ENCODE measurements at regions of chr7 and their contacts with region 1.

Region 1: GRCh38 chr7:32164346-32164957 is 94.2 kb upstream of the PDE1C start:
- DNase-seq: peak in 1 of 2 experiments; percentile 47
- H3K4me3 ChIP-seq: no peak overlapping the region
- H3K27ac ChIP-seq: no peak overlapping the region
- H3K4me1 ChIP-seq: no peaks in the 10 kb centered on the region
- H3K27me3 ChIP-seq: no peaks in the 10 kb centered on the region
- CTCF ChIP-seq: peak; percentile 29 to 77 (median 64)
- EP300 ChIP-seq: no peak
- POLR2A ChIP-seq: no peak
- RAD21 ChIP-seq: peak; percentile 82

Region 2: GRCh38 chr7:31744294-31744874 is 420.1 kb before region 1 on chr7:
- CTCF ChIA-PET with region 1: interaction called, 17 read pairs
- POLR2A ChIA-PET with region 1: no interaction called
- DNase-seq: peak in 1 of 2 experiments; percentile 67
- H3K4me3 ChIP-seq: no peak overlapping the region
- H3K27ac ChIP-seq: no peak overlapping the region
- H3K4me1 ChIP-seq: no peaks in the 10 kb centered on the region
- H3K27me3 ChIP-seq: peaks cover 0 to 6% (median 1%) of the 10 kb centered on the region in 4 experiments; a peak in 4 of 7 replicates
- CTCF ChIP-seq: peak; percentile 45 to 89 (median 76)
- EP300 ChIP-seq: no peak
- POLR2A ChIP-seq: no peak
- RAD21 ChIP-seq: peak; percentile 98

Region 3: DNA sequence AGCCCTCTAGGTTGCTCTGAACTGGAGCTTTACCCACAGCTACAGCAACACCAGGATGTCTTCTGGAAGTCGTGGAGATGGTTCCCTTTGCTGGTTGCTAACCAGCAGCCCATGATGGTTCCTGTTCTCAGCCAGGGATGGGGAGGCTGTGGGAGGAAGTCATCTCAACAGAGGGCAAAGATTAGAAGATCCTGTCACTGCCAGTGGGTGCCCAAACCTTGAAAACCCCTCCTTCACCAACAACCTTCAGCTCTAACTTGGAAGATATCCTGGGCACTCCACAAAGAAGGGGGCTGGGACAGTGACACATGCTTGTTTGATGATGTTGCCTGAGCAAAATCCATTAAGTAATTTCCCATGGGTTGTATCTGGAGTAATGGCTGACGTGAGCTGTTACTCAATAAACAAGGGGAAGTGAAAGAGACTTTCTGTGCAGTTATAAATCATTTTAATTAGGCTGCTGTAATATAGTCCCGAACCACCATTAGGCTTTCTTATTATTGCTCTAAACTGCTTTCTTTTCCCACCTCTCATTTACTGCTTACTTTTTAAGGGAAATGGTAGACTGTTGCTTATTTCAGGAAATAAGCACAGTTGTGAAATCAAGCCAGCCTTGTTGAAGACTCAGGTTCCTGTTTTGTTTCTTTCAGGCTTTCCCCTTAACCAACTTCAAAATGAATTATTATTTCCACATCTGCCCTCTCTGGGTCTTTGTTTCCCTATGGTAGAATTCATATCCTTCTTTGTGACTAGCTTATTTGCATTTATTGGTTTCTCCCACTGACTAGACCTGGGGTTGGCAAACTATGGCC is 352.6 kb before region 1 on chr7:
- CTCF ChIA-PET with region 1: interaction called, 30 read pairs
- POLR2A ChIA-PET with region 1: no interaction called
- DNase-seq: no peak
- H3K4me3 ChIP-seq: no peak overlapping the region
- H3K27ac ChIP-seq: no peak overlapping the region
- H3K4me1 ChIP-seq: no peaks in the 10 kb centered on the region
- H3K27me3 ChIP-seq: no peaks in the 10 kb centered on the region
- CTCF ChIP-seq: no peak
- EP300 ChIP-seq: no peak
- POLR2A ChIP-seq: no peak
- RAD21 ChIP-seq: no peak

Region 4: DNA sequence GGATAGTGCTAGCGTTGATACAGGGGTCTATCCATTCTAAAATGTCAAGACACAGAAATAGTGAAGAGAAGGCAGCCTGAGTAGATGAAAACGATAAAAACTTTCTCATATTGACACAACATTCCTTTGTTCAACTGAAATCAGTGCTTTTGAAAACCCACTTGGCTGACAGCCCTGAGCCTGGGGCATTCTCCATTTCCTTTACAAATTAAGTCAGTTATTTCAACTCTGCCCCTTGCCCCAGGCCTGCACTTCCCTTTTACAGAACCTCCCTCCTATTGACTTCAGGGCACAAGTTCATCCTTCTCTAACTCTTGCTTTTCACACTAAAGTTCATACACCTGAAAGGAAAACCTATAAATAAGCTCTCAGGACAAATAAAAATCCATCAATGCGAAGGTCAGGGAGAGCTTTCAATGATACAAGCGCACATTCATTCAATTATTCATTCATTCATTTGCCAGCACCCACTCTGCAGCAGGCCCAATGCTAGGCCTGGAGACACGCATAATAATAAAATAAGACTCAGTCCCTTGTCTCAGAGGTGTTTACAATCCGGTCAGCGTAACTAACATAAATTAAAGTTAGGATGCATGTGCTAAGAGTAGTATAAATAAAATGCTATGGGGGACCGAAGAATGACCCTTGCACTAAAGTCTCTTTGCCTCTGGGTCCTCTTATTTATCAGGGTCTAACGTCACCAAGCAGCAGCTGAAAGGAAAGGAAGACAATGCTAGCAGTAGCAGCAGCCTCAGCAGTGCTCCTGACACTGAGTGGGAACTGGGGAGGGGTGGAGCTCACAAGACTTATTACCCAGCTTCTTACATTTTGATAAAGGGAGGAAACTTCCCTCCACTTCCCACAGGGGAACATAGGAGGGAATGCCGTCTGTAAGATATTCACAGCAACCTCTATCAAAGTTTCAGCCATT is 229.1 kb before region 1 on chr7:
- CTCF ChIA-PET with region 1: no interaction called
- POLR2A ChIA-PET with region 1: no interaction called
- DNase-seq: no peak
- H3K4me3 ChIP-seq: no peak overlapping the region
- H3K27ac ChIP-seq: no peak overlapping the region
- H3K4me1 ChIP-seq: no peaks in the 10 kb centered on the region
- H3K27me3 ChIP-seq: no peaks in the 10 kb centered on the region
- CTCF ChIP-seq: no peak
- EP300 ChIP-seq: no peak
- POLR2A ChIP-seq: no peak
- RAD21 ChIP-seq: no peak

Region 5: GRCh38 chr7:32068411-32069101 is 95.9 kb before region 1 on chr7:
- CTCF ChIA-PET with region 1: interaction called, 10 read pairs
- POLR2A ChIA-PET with region 1: no interaction called
- DNase-seq: no peak
- H3K4me3 ChIP-seq: no peak overlapping the region
- H3K27ac ChIP-seq: no peak overlapping the region
- H3K4me1 ChIP-seq: no peaks in the 10 kb centered on the region; a peak in 1 of 7 replicates
- H3K27me3 ChIP-seq: peaks cover 28 to 52% (median 44%) of the 10 kb centered on the region in 4 experiments
- CTCF ChIP-seq: no peak
- EP300 ChIP-seq: no peak
- POLR2A ChIP-seq: no peak
- RAD21 ChIP-seq: no peak

Region 6: GRCh38 chr7:32179567-32179966 is 15.1 kb after region 1 on chr7:
- CTCF ChIA-PET with region 1: interaction called, 22 read pairs
- POLR2A ChIA-PET with region 1: no interaction called
- DNase-seq: no peak
- H3K4me3 ChIP-seq: no peak overlapping the region
- H3K27ac ChIP-seq: no peak overlapping the region
- H3K4me1 ChIP-seq: peaks cover 0 to 4% (median 2%) of the 10 kb centered on the region in 4 experiments; a peak in 2 of 7 replicates
- H3K27me3 ChIP-seq: no peaks in the 10 kb centered on the region
- CTCF ChIP-seq: no peak
- EP300 ChIP-seq: no peak
- POLR2A ChIP-seq: no peak
- RAD21 ChIP-seq: no peak

Region 7: DNA sequence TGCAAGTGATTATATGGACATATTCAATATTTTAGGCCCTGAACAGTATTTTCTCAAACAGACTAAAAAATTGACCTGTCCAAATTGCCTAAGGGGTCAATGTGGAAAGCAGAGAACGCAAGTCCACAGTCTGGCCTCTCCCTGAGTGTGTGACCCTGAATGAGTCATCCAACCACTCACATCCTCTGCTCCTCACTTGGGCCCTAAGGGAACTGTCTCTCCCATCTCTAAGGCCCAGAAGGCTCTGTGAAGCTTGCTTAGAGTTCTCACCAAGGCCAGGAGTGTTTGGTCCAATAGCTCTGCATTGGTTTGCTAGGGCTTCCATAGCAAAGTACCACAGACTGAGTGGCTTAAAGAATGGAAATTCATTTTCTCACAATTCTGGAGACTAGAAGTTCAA is 170.7 kb after region 1 on chr7:
- CTCF ChIA-PET with region 1: no interaction called
- POLR2A ChIA-PET with region 1: no interaction called
- DNase-seq: no peak
- H3K4me3 ChIP-seq: no peak overlapping the region
- H3K27ac ChIP-seq: no peak overlapping the region
- H3K4me1 ChIP-seq: no peaks in the 10 kb centered on the region
- H3K27me3 ChIP-seq: no peaks in the 10 kb centered on the region
- CTCF ChIP-seq: no peak
- EP300 ChIP-seq: no peak
- POLR2A ChIP-seq: no peak
- RAD21 ChIP-seq: no peak

Measured in H1 (cell line).